ENCODE measurements at regions of chr10 and their contacts with region 1.

Region 1: GRCh38 chr10:117552156-117552631 is 9.6 kb downstream of the EMX2 start:
- DNase-seq: no peak
- H3K4me3 Mint-ChIP-seq: no peak overlapping the region
- H3K27ac Mint-ChIP-seq: no peak overlapping the region
- H3K4me1 Mint-ChIP-seq: peaks cover 6% of the 10 kb centered on the region
- H3K27me3 Mint-ChIP-seq: peaks cover 73% of the 10 kb centered on the region

Region 2: GRCh38 chr10:117647306-117647705 is 95.1 kb after region 1 on chr10:
- intact Hi-C with region 1: no loop called
- DNase-seq: no peak
- H3K4me3 Mint-ChIP-seq: no peak overlapping the region
- H3K27ac Mint-ChIP-seq: no peak overlapping the region
- H3K4me1 Mint-ChIP-seq: peaks cover 4% of the 10 kb centered on the region
- H3K27me3 Mint-ChIP-seq: peaks cover 18% of the 10 kb centered on the region

Region 3: GRCh38 chr10:117736684-117737083 is 184.5 kb after region 1 on chr10:
- intact Hi-C with region 1: loop called (anchors 5 kb)
- DNase-seq: no peak
- H3K4me3 Mint-ChIP-seq: no peak overlapping the region
- H3K27ac Mint-ChIP-seq: no peak overlapping the region
- H3K4me1 Mint-ChIP-seq: no peaks in the 10 kb centered on the region
- H3K27me3 Mint-ChIP-seq: peaks cover 48% of the 10 kb centered on the region

Region 4: DNA sequence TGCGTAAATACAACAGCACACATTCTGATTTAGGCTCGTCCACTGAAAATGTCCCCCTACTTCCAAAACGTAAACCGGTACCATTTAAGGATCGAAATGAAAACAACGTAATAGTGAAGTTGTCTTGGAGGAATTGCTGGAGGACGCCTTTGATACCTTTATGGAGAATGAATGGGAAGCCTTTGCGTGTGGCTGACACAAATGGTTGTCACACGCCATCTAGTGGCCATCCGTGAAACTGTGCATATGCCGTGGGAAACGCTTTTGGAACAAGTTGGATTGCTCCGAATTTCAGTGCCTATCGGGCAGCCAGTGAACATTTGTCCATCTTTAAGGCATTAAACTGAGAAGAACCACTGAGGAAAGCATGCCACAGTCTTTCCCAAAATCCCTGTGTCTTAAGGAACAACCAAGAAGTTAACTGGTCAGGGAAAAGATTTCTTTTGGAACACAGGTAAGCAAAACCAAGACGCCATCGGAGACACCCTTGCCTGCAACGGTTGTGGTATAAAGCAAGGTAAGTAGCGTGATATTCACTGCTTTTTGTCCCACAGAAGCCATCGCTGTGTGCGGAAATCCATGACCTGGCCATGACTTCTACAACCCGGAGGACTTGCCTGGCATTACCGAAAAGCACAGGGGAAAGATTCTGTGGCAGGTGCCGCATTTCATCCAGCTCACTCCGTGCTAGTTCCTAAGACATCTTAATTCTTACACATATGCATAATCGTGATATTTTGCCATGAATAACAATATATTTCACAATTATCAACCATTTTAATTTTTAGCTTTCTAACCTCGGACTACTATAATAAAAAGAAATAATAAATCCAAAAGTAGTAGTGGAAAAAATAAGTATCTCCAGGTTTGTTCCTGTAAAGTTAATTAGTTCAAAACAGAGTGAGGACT is 689.3 kb after region 1 on chr10:
- intact Hi-C with region 1: loop called (anchors 5 kb)
- DNase-seq: peak; percentile 43
- H3K4me3 Mint-ChIP-seq: no peak overlapping the region
- H3K27ac Mint-ChIP-seq: no peak overlapping the region
- H3K4me1 Mint-ChIP-seq: no peaks in the 10 kb centered on the region
- H3K27me3 Mint-ChIP-seq: peaks cover 26% of the 10 kb centered on the region